CD4-positive, alpha-beta T cell (primary cell): ENCODE measurements at regions of chr11 and their contacts with region 1.

Region 1: GRCh38 chr11:14075118-14076078 is 112.9 kb downstream of the SPON1 start:
- DNase-seq: peak; percentile 39 to 85 (median 59)
- ATAC-seq: peak; percentile 90
- H3K4me3 ChIP-seq: peak overlapping the region; percentile 45
- H3K4me3 Mint-ChIP-seq: peak overlapping the region; percentile 77
- H3K27ac ChIP-seq: peak overlapping the region; percentile 7 to 24
- H3K27ac Mint-ChIP-seq: peak overlapping the region; percentile 92
- H3K4me1 ChIP-seq: peaks cover 46% of the 10 kb centered on the region
- H3K4me1 Mint-ChIP-seq: peaks cover 71% of the 10 kb centered on the region
- H3K27me3 ChIP-seq: no peaks in the 10 kb centered on the region
- H3K27me3 Mint-ChIP-seq: no peaks in the 10 kb centered on the region
- CTCF ChIP-seq: no peak

Region 2: DNA sequence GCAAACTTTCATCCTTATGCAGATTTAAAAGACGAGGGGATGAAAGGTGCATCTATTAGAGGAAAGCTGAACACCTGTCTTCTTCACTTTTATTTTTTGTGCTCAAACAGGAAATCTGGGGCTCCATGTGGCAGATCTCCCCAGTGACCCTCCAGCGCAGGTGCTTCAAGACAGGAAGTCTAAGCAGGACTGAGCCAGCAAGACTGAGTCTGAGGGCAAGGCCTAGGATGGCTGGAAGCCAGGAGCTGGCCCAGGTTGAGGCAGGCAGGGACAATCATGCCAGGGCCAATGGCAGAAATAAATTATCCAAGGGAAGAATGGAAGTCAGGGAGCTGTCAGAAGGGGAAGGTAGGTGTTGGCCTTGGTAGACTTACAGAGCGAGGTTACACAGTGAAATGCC is 214.0 kb before region 1 on chr11:
- CTCF ChIA-PET with region 1: no interaction called
- POLR2A ChIA-PET with region 1: no interaction called
- intact Hi-C with region 1: loop called in 1 of 2 experiments (anchors 5 kb)
- DNase-seq: peak in 7 of 14 experiments; percentile 8 to 55 (median 24)
- ATAC-seq: peak; percentile 45
- H3K4me3 ChIP-seq: no peak overlapping the region
- H3K4me3 Mint-ChIP-seq: no peak overlapping the region
- H3K27ac ChIP-seq: no peak overlapping the region
- H3K27ac Mint-ChIP-seq: peak overlapping the region; percentile 72
- H3K4me1 ChIP-seq: peaks cover 21% of the 10 kb centered on the region
- H3K4me1 Mint-ChIP-seq: peaks cover 27% of the 10 kb centered on the region
- H3K27me3 ChIP-seq: no peaks in the 10 kb centered on the region
- H3K27me3 Mint-ChIP-seq: no peaks in the 10 kb centered on the region
- CTCF ChIP-seq: no peak

Region 3: DNA sequence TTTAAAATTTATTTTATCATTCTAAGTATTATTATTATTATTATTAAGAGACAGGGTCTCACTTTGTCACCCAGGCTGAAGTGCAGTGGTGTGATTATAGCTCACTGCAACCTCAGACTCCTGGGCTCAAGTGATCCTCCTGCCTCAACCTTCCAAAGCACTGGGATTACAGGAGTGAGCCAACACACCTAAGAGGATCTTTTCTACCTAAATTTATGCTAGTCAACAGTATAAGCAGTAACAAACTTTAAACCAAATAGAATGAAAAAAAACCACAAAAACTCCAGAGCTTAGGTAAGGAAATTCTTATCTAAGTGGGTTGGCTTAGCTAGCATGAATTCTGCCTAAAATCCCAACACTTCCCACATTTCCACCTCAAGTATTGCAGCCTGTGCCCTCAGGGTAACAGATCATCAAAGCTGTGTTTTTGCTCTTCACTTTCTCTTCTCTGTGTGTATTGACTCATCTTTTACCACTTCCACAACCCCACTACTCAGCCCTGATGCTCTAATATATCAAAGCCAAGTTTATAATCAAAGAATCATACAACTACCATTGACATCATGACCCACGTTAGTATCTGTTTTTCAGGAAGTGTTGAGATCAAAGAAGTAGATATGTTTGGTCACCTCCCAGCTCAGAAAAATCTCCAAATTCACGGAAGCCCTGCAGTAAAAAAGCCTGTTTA is 206.5 kb before region 1 on chr11:
- CTCF ChIA-PET with region 1: no interaction called
- POLR2A ChIA-PET with region 1: interaction called, 4 read pairs
- intact Hi-C with region 1: loop called in 1 of 2 experiments (anchors 1 kb)
- DNase-seq: peak in 9 of 14 experiments; percentile 2 to 90 (median 37)
- ATAC-seq: peak; percentile 89
- H3K4me3 ChIP-seq: no peak overlapping the region
- H3K4me3 Mint-ChIP-seq: peak overlapping the region; percentile 0
- H3K27ac ChIP-seq: peak overlapping the region; percentile 69 to 71
- H3K27ac Mint-ChIP-seq: peak overlapping the region; percentile 83
- H3K4me1 ChIP-seq: peaks cover 10% of the 10 kb centered on the region
- H3K4me1 Mint-ChIP-seq: peaks cover 54% of the 10 kb centered on the region
- H3K27me3 ChIP-seq: no peaks in the 10 kb centered on the region
- H3K27me3 Mint-ChIP-seq: no peaks in the 10 kb centered on the region
- CTCF ChIP-seq: no peak

Region 4: GRCh38 chr11:13955971-13956421 is 119.4 kb before region 1 on chr11:
- CTCF ChIA-PET with region 1: interaction called, 3 read pairs
- POLR2A ChIA-PET with region 1: no interaction called
- intact Hi-C with region 1: loop called in 1 of 2 experiments (anchors 5 kb)
- DNase-seq: peak; percentile 32 to 89 (median 52)
- ATAC-seq: peak; percentile 77
- H3K4me3 ChIP-seq: no peak overlapping the region
- H3K4me3 Mint-ChIP-seq: no peak overlapping the region
- H3K27ac ChIP-seq: no peak overlapping the region
- H3K27ac Mint-ChIP-seq: no peak overlapping the region
- H3K4me1 ChIP-seq: peaks cover 10% of the 10 kb centered on the region
- H3K4me1 Mint-ChIP-seq: no peaks in the 10 kb centered on the region
- H3K27me3 ChIP-seq: peaks cover 3 to 4% of the 10 kb centered on the region in 2 experiments
- H3K27me3 Mint-ChIP-seq: peaks cover 26% of the 10 kb centered on the region
- CTCF ChIP-seq: peak; percentile 86

Region 5: GRCh38 chr11:13962562-13963168 is 112.7 kb before region 1 on chr11 and contains the start of gene SPON1:
- CTCF ChIA-PET with region 1: no interaction called
- POLR2A ChIA-PET with region 1: interaction called, 5 read pairs
- intact Hi-C with region 1: loop called (anchors 2 to 5 kb)
- DNase-seq: peak; percentile 30 to 74 (median 52)
- ATAC-seq: peak; percentile 84
- H3K4me3 ChIP-seq: peak within 1 kb of the TSS; percentile 45
- H3K4me3 Mint-ChIP-seq: peak within 1 kb of the TSS; percentile 83
- H3K27ac ChIP-seq: no peak within 1 kb of the TSS
- H3K27ac Mint-ChIP-seq: no peak within 1 kb of the TSS
- H3K4me1 ChIP-seq: peaks cover 24% of the 10 kb centered on the region
- H3K4me1 Mint-ChIP-seq: peaks cover 13% of the 10 kb centered on the region
- H3K27me3 ChIP-seq: peaks cover 33 to 59% of the 10 kb centered on the region in 2 experiments
- H3K27me3 Mint-ChIP-seq: peaks cover 75% of the 10 kb centered on the region
- CTCF ChIP-seq: no peak
- total RNA-seq, gene SPON1: 2.1 to 2.2 TPM

Region 6: GRCh38 chr11:14065141-14065540 is 10.3 kb before region 1 on chr11:
- CTCF ChIA-PET with region 1: no interaction called
- POLR2A ChIA-PET with region 1: interaction called, 10 read pairs
- intact Hi-C with region 1: no loop called
- DNase-seq: peak in 4 of 14 experiments; percentile 14 to 55 (median 23)
- ATAC-seq: peak; percentile 64
- H3K4me3 ChIP-seq: peak overlapping the region; percentile 17
- H3K4me3 Mint-ChIP-seq: peak overlapping the region; percentile 69
- H3K27ac ChIP-seq: no peak overlapping the region
- H3K27ac Mint-ChIP-seq: no peak overlapping the region
- H3K4me1 ChIP-seq: peaks cover 6% of the 10 kb centered on the region
- H3K4me1 Mint-ChIP-seq: peaks cover 24% of the 10 kb centered on the region
- H3K27me3 ChIP-seq: no peaks in the 10 kb centered on the region
- H3K27me3 Mint-ChIP-seq: no peaks in the 10 kb centered on the region
- CTCF ChIP-seq: no peak

Region 7: DNA sequence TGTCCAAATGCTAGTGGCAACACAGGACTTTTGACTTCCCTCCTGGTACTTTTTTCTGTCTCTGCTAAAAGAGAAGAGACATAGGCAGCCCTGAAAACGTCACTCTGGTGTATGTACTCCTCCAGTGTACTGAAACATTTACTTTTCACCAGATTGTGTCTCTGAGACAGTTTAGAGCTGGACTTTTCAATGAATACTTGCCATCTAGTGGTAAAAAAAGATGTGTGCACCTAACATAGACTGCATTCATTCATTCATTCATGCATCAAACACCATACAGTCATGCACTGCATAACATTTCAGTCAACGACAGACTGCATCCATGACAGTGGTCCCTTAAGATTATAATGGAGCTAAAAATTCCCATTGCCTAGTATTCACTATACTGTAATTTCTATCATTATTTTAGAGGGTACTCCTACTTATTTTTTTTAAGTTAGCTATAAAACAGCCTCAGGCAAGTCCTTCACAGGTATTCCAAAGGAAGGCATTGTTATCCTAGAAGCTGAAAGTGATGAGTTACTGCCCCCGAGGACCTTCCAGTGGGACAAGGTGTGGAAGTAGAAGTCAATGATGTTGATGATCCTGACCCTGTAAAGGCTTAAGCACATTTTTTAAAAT is 73.4 kb after region 1 on chr11:
- CTCF ChIA-PET with region 1: no interaction called
- POLR2A ChIA-PET with region 1: interaction called, 4 read pairs
- intact Hi-C with region 1: loop called in 1 of 2 experiments (anchors 5 kb)
- DNase-seq: peak in 3 of 14 experiments; percentile 56 to 64 (median 63)
- ATAC-seq: peak; percentile 97
- H3K4me3 ChIP-seq: no peak overlapping the region
- H3K4me3 Mint-ChIP-seq: no peak overlapping the region
- H3K27ac ChIP-seq: no peak overlapping the region
- H3K27ac Mint-ChIP-seq: no peak overlapping the region
- H3K4me1 ChIP-seq: no peaks in the 10 kb centered on the region
- H3K4me1 Mint-ChIP-seq: peaks cover 5% of the 10 kb centered on the region
- H3K27me3 ChIP-seq: no peaks in the 10 kb centered on the region
- H3K27me3 Mint-ChIP-seq: no peaks in the 10 kb centered on the region
- CTCF ChIP-seq: peak; percentile 68